ENCODE measurements at regions of chr6 and their contacts with region 1.

Region 1: GRCh38 chr6:131923356-131923755 is 27.8 kb downstream of the CCN2 start:
- DNase-seq: no peak
- H3K4me3 ChIP-seq: no peak overlapping the region
- H3K27ac ChIP-seq: no peak overlapping the region
- H3K4me1 ChIP-seq: no peaks in the 10 kb centered on the region
- H3K27me3 ChIP-seq: peaks cover 0 to 12% (median 0%) of the 10 kb centered on the region in 7 donors
- CTCF ChIP-seq: peak in 9 of 11 experiments; percentile 20 to 67 (median 51)
- POLR2A ChIP-seq: no peak

Region 2: GRCh38 chr6:131885237-131885636 is 38.1 kb before region 1 on chr6:
- intact Hi-C with region 1: no loop called
- DNase-seq: no peak
- H3K4me3 ChIP-seq: no peak overlapping the region
- H3K27ac ChIP-seq: no peak overlapping the region
- H3K4me1 ChIP-seq: no peaks in the 10 kb centered on the region
- H3K27me3 ChIP-seq: no peaks in the 10 kb centered on the region
- CTCF ChIP-seq: no peak
- POLR2A ChIP-seq: no peak

Region 3: DNA sequence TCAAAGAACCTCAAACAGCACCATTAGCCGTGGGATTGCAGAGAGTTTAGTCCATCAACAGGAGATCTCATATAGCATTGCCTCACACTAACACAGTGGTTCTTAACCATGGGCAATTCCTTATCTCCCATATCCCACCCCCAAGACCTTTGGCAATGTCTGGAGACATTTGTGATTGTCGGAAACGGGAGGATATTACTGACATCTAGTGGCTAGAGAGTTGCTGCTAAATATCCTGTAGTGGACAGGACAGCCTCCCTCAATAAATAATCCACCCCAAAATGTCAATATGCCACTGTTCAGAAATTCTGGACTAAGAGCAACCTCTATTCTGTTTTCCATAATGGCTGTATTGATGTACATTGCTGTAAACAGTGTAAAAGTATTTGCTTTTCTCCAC is 237.9 kb after region 1 on chr6:
- intact Hi-C with region 1: loop called (anchors 10 kb)
- DNase-seq: no peak
- H3K4me3 ChIP-seq: no peak overlapping the region
- H3K27ac ChIP-seq: no peak overlapping the region
- H3K4me1 ChIP-seq: peaks cover 0 to 3% (median 0%) of the 10 kb centered on the region in 6 donors
- H3K27me3 ChIP-seq: no peaks in the 10 kb centered on the region
- CTCF ChIP-seq: peak in 9 of 11 experiments; percentile 8 to 64 (median 50)
- POLR2A ChIP-seq: no peak

Region 4: DNA sequence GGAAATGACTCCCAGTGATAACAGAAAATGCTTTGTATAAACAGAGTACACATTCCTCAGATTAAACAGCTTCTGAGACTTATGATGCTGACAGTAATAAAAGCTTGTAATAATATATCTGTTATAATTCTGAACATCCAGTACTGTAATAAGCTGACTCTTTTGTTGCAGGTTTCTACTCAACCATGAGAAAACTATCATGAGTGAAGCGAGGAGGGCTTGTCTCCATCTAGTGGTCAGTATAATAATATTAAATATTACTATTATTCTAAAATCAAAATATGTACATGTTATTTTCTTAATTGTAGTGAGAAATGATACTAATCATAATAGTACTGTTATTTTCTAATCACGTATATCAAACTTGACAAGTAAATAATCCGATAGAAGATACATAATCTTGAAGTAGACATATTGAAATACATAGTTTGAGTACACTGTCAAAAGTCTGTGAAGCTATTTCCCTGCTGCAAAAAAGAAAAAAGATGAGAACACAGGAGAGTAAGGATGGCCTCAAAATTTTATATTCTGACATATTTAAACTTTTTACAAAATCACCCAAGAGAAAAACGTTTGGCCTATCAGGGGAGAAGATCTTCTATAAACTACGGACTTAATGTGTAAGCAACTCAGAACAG is 294.8 kb after region 1 on chr6:
- intact Hi-C with region 1: loop called (anchors 5 kb)
- DNase-seq: no peak
- H3K4me3 ChIP-seq: no peak overlapping the region
- H3K27ac ChIP-seq: no peak overlapping the region
- H3K4me1 ChIP-seq: no peaks in the 10 kb centered on the region
- H3K27me3 ChIP-seq: no peaks in the 10 kb centered on the region
- CTCF ChIP-seq: peak in 4 of 11 experiments; percentile 15 to 43 (median 30)
- POLR2A ChIP-seq: no peak

Measured in spleen (tissue), 13 donors.